Activated naive CD4-positive, alpha-beta T cell treated with anti-CD3 and anti-CD28 coated beads, Interleukin-2, amount 10 ng/mL, durations not matched to agents 7 days and 5 days (primary cell): ENCODE measurements at regions of chr1 and their contacts with region 1.

Region 1: GRCh38 chr1:214328770-214329469 is 48.0 kb downstream of the SMYD2 start:
- DNase-seq: peak; percentile 86
- H3K4me3 Mint-ChIP-seq: no peak overlapping the region
- H3K27ac Mint-ChIP-seq: no peak overlapping the region
- H3K4me1 Mint-ChIP-seq: peaks cover 2% of the 10 kb centered on the region
- H3K27me3 Mint-ChIP-seq: no peaks in the 10 kb centered on the region

Region 2: GRCh38 chr1:214198571-214198970 is 130.3 kb before region 1 on chr1:
- CTCF ChIA-PET with region 1: interaction called, 14 read pairs
- DNase-seq: no peak
- H3K4me3 Mint-ChIP-seq: no peak overlapping the region
- H3K27ac Mint-ChIP-seq: no peak overlapping the region
- H3K4me1 Mint-ChIP-seq: no peaks in the 10 kb centered on the region
- H3K27me3 Mint-ChIP-seq: peaks cover 7% of the 10 kb centered on the region

Region 3: GRCh38 chr1:214261206-214262123 is 67.5 kb before region 1 on chr1:
- CTCF ChIA-PET with region 1: interaction called, 435 read pairs
- DNase-seq: peak; percentile 87
- H3K4me3 Mint-ChIP-seq: no peak overlapping the region
- H3K27ac Mint-ChIP-seq: no peak overlapping the region
- H3K4me1 Mint-ChIP-seq: peaks cover 15% of the 10 kb centered on the region
- H3K27me3 Mint-ChIP-seq: peaks cover 52% of the 10 kb centered on the region

Region 4: GRCh38 chr1:214277704-214278635 is 51.0 kb before region 1 on chr1:
- CTCF ChIA-PET with region 1: interaction called, 21 read pairs
- DNase-seq: no peak
- H3K4me3 Mint-ChIP-seq: no peak overlapping the region
- H3K27ac Mint-ChIP-seq: no peak overlapping the region
- H3K4me1 Mint-ChIP-seq: peaks cover 28% of the 10 kb centered on the region
- H3K27me3 Mint-ChIP-seq: peaks cover 19% of the 10 kb centered on the region

Region 5: GRCh38 chr1:214292322-214292721 is 36.6 kb before region 1 on chr1:
- CTCF ChIA-PET with region 1: no interaction called
- DNase-seq: no peak
- H3K4me3 Mint-ChIP-seq: no peak overlapping the region
- H3K27ac Mint-ChIP-seq: no peak overlapping the region
- H3K4me1 Mint-ChIP-seq: peaks cover 8% of the 10 kb centered on the region
- H3K27me3 Mint-ChIP-seq: no peaks in the 10 kb centered on the region

Region 6: DNA sequence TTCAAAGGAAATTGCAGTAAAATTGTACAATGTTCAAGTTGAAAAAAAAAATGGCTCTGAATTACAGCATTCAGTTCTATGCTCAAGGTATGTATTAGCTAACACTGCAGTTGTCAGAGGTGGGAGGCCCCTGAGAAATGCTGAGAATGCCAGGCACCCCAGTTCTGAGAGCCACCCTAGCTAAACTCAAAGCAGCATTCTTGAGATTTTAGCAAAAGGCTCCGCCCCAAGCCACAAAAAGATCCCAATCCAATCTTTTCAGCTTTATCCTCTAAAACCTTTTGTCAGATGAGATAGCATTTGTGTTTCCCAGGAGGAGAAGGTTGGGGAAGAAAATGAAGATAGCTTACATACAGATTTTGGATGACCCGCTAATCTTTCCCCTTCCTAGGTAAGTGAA is 20.9 kb after region 1 on chr1:
- CTCF ChIA-PET with region 1: interaction called, 12 read pairs
- DNase-seq: no peak
- H3K4me3 Mint-ChIP-seq: no peak overlapping the region
- H3K27ac Mint-ChIP-seq: no peak overlapping the region
- H3K4me1 Mint-ChIP-seq: no peaks in the 10 kb centered on the region
- H3K27me3 Mint-ChIP-seq: peaks cover 3% of the 10 kb centered on the region

Region 7: DNA sequence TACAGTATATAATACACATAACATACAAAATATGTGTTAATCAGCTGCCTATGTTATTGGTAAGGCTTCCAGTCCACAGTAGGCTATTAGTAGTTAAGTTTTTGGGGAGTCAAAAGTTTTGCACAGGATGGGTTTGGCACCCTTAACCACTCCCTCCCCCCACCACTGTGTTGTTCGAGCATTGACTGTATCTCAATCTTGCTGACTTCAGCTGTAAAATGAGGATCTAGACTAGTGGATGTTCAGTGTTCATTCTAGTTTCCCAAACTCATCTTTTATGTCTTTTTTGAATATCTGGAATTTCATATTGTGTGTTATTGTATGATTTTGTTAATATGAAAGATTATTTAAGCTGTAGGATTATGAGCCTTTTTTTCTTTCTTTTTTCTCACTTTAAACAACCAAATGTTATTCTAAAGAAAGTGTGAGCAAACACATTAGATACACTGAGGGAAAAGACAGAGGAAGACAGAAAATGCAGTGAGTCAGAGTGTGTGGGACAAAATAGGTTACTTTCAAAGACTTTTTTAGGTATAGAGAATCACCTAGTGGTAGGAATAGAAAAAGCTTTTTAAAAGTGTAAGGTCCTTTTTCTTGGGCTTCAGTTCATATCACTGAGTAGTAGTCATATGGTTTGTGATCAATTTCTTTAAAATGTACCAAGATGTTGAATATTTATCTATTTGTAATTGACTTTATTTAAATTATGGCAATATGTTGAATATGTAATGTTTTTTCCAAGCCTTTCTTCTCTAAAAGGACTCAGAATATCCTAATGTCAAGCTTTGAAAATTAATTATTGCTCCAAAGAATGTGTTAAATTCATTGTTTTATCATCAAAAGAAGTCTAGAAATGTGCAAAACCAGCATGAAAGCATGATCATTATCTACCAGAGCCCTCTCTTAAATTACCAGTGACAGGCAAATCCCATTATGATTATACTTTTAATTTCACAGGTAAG is 256.2 kb after region 1 on chr1:
- CTCF ChIA-PET with region 1: interaction called, 252 read pairs
- DNase-seq: no peak
- H3K4me3 Mint-ChIP-seq: no peak overlapping the region
- H3K27ac Mint-ChIP-seq: no peak overlapping the region
- H3K4me1 Mint-ChIP-seq: no peaks in the 10 kb centered on the region
- H3K27me3 Mint-ChIP-seq: peaks cover 9% of the 10 kb centered on the region

Region 8: DNA sequence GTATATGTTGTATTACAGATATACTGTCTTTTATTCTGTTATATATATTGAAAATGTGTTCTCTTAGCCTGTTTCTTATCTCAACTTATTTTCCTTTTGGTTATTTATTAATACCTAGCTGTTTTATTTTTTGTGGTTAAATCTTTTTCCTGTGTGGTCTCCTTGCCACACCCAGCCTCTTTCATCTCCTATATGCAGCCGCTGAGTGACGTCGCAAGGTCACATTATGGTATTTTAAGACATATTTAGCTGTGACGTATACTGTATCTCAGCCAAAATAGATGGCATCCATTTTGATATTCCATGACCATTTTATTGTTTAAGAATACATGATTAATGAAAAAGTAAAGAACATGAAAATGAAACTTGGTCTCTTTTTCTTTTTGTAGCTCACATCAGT is 303.2 kb after region 1 on chr1:
- CTCF ChIA-PET with region 1: interaction called, 33 read pairs
- DNase-seq: peak; percentile 65
- H3K4me3 Mint-ChIP-seq: no peak overlapping the region
- H3K27ac Mint-ChIP-seq: peak overlapping the region; percentile 94
- H3K4me1 Mint-ChIP-seq: peaks cover 30% of the 10 kb centered on the region
- H3K27me3 Mint-ChIP-seq: no peaks in the 10 kb centered on the region